ENCODE measurements at regions of chr16 and their contacts with region 1.

Region 1: DNA sequence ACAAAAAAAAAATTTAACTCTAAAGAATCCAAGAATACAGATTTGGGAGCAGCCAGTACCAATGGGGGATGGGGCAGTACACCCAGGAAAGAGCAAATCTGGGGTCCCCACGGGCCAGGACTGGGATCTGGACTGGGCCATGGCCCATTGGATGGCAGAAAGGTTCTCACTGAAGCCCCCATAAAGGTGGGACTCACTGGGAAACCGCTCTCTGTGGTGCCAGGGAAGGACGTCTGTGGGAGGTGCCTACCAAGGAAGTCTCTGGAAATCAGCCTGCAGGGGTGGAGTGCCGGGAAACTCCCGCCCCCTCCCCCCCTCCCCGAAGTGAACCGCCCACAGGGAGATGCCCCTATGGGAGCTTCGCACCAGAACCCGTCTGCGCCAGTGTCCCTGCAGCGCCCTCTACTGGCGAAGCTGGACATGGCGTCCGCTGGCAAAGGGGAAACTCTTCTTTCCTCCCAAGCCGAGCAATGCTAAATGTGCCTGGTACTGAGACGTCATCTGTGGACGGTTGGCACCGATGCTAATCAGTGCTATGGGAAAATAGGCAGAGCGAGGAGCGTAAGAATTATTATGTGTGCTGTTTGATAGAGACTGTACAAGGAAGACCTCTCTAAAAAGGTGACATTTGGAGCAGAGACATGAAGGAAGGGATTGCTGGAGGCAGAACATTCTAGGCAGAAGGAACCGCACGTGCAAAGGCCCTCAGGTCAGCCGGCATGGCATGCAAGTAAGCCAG is 671.1 kb downstream of the WWOX start:
- DNase-seq: peak; percentile 73 to 80 (median 77)
- H3K4me3 ChIP-seq: no peak overlapping the region
- H3K4me3 Mint-ChIP-seq: peak overlapping the region in 3 of 8 donors; percentile 4 to 48 (median 33)
- H3K27ac ChIP-seq: no peak overlapping the region
- H3K27ac Mint-ChIP-seq: peak overlapping the region; percentile 5 to 83 (median 31)
- H3K4me1 ChIP-seq: peaks cover 24% of the 10 kb centered on the region
- H3K4me1 Mint-ChIP-seq: peaks cover 17 to 30% (median 21%) of the 10 kb centered on the region in 4 donors
- H3K27me3 ChIP-seq: no peaks in the 10 kb centered on the region
- H3K27me3 Mint-ChIP-seq: peaks cover 0 to 2% of the 10 kb centered on the region in 2 donors

Region 2: DNA sequence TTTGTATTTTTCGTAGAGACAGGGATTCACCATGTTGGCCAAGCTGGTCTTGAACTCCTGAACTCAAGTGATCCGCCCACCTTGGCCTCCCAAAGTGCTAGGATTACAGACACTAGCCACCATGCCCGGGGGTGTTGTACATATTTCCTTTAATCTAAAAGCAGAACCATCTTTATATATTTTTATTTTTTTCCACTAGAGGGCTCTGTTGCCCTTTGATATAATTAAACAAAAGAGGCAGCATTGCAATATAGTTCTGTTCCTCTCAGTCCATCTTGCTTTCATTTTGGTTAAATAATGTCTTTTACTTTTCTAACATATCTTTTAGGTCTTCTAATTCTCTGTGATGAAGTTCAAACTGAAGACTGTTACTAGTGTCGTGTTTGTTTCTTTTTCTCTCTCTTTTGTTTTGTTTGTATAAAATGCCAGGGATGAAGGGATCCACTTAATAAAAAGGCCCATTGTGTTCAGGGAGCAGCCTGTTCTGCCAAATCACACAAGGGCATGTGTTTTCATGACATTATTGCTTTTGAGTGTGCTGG is 647.7 kb before region 1 on chr16:
- CTCF ChIA-PET with region 1: no interaction called
- POLR2A ChIA-PET with region 1: no interaction called
- intact Hi-C with region 1: loop called (anchors 1 kb)
- DNase-seq: peak in 4 of 5 donors; percentile 54 to 63 (median 58)
- H3K4me3 ChIP-seq: no peak overlapping the region
- H3K4me3 Mint-ChIP-seq: peak overlapping the region in 3 of 8 donors; percentile 32 to 53 (median 49)
- H3K27ac ChIP-seq: no peak overlapping the region
- H3K27ac Mint-ChIP-seq: peak overlapping the region in 5 of 7 donors; percentile 14 to 73 (median 62)
- H3K4me1 ChIP-seq: no peaks in the 10 kb centered on the region
- H3K4me1 Mint-ChIP-seq: peaks cover 2 to 11% (median 4%) of the 10 kb centered on the region in 4 donors
- H3K27me3 ChIP-seq: no peaks in the 10 kb centered on the region
- H3K27me3 Mint-ChIP-seq: no peaks in the 10 kb centered on the region

Region 3: DNA sequence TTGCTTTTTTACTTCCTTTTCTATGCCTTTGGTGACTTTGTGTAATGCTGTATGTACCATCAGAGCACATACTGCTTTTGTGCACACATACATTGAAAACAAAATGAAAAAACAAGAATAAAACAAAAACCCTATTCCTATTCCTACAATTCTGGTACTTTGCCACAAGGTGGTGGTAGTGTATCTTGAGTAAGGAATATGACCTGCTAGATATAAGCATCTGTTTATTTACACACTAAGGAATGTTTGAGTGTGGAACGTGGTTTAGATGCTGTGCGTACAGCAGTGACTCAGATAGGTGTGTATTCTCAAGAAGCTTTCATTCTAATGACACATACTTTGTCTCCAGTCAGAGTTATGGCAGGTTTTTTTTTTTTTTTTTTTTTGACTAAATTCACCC is 64.8 kb before region 1 on chr16:
- CTCF ChIA-PET with region 1: interaction called, 64 read pairs
- POLR2A ChIA-PET with region 1: interaction called, 14 read pairs
- intact Hi-C with region 1: loop called (anchors 1 kb)
- DNase-seq: peak in 4 of 5 donors; percentile 23 to 48 (median 44)
- H3K4me3 ChIP-seq: no peak overlapping the region
- H3K4me3 Mint-ChIP-seq: no peak overlapping the region
- H3K27ac ChIP-seq: no peak overlapping the region
- H3K27ac Mint-ChIP-seq: no peak overlapping the region
- H3K4me1 ChIP-seq: no peaks in the 10 kb centered on the region
- H3K4me1 Mint-ChIP-seq: peaks cover 0 to 3% (median 0%) of the 10 kb centered on the region in 4 donors
- H3K27me3 ChIP-seq: no peaks in the 10 kb centered on the region
- H3K27me3 Mint-ChIP-seq: no peaks in the 10 kb centered on the region

Region 4: DNA sequence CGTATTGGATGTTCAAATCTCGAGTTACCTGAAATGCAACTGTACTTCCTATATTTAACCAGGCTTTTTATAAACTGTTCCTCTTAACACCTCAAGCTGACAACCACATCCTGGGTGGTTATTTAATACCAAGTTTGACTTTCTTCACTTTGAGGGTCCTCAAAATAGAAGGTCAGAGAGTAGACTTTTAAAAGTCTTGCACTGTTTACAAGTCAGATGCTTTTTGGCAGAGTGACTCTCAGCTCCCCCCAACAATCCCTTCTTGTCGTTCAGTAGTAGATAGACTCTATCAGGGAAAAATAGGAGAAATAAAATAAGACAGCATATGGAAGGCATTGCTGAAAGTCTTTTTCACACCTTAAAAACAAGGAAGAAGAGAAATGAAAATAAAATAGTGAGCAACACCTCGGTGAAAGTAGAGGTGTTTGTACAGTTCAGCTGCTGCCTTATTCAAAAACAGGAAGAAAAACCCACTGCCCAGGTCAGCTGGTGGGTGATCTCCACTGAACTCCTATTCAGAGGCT is 20.7 kb before region 1 on chr16:
- CTCF ChIA-PET with region 1: interaction called, 13 read pairs
- POLR2A ChIA-PET with region 1: interaction called, 11 read pairs
- intact Hi-C with region 1: no loop called
- DNase-seq: peak in 4 of 5 donors; percentile 27 to 47 (median 34)
- H3K4me3 ChIP-seq: peak overlapping the region in 1 of 2 donors; percentile 5
- H3K4me3 Mint-ChIP-seq: peak overlapping the region; percentile 23 to 85 (median 68)
- H3K27ac ChIP-seq: peak overlapping the region; percentile 10
- H3K27ac Mint-ChIP-seq: peak overlapping the region; percentile 14 to 96 (median 55)
- H3K4me1 ChIP-seq: peaks cover 32% of the 10 kb centered on the region
- H3K4me1 Mint-ChIP-seq: peaks cover 26 to 38% (median 29%) of the 10 kb centered on the region in 4 donors
- H3K27me3 ChIP-seq: no peaks in the 10 kb centered on the region
- H3K27me3 Mint-ChIP-seq: no peaks in the 10 kb centered on the region

Region 5: GRCh38 chr16:78791011-78791410 is 20.5 kb after region 1 on chr16:
- CTCF ChIA-PET with region 1: no interaction called
- POLR2A ChIA-PET with region 1: no interaction called
- intact Hi-C with region 1: no loop called
- DNase-seq: no peak
- H3K4me3 ChIP-seq: no peak overlapping the region
- H3K4me3 Mint-ChIP-seq: no peak overlapping the region
- H3K27ac ChIP-seq: no peak overlapping the region
- H3K27ac Mint-ChIP-seq: peak overlapping the region in 3 of 7 donors; percentile 39 to 72 (median 55)
- H3K4me1 ChIP-seq: peaks cover 18% of the 10 kb centered on the region
- H3K4me1 Mint-ChIP-seq: peaks cover 14 to 25% (median 19%) of the 10 kb centered on the region in 4 donors
- H3K27me3 ChIP-seq: no peaks in the 10 kb centered on the region
- H3K27me3 Mint-ChIP-seq: no peaks in the 10 kb centered on the region

Region 6: GRCh38 chr16:79047229-79047983 is 276.9 kb after region 1 on chr16:
- CTCF ChIA-PET with region 1: no interaction called
- POLR2A ChIA-PET with region 1: no interaction called
- intact Hi-C with region 1: loop called (anchors 1 kb)
- DNase-seq: peak in 4 of 5 donors; percentile 14 to 38 (median 23)
- H3K4me3 ChIP-seq: no peak overlapping the region
- H3K4me3 Mint-ChIP-seq: no peak overlapping the region
- H3K27ac ChIP-seq: no peak overlapping the region
- H3K27ac Mint-ChIP-seq: no peak overlapping the region
- H3K4me1 ChIP-seq: peaks cover 18% of the 10 kb centered on the region
- H3K4me1 Mint-ChIP-seq: peaks cover 21 to 24% (median 22%) of the 10 kb centered on the region in 4 donors
- H3K27me3 ChIP-seq: no peaks in the 10 kb centered on the region
- H3K27me3 Mint-ChIP-seq: no peaks in the 10 kb centered on the region

Region 7: DNA sequence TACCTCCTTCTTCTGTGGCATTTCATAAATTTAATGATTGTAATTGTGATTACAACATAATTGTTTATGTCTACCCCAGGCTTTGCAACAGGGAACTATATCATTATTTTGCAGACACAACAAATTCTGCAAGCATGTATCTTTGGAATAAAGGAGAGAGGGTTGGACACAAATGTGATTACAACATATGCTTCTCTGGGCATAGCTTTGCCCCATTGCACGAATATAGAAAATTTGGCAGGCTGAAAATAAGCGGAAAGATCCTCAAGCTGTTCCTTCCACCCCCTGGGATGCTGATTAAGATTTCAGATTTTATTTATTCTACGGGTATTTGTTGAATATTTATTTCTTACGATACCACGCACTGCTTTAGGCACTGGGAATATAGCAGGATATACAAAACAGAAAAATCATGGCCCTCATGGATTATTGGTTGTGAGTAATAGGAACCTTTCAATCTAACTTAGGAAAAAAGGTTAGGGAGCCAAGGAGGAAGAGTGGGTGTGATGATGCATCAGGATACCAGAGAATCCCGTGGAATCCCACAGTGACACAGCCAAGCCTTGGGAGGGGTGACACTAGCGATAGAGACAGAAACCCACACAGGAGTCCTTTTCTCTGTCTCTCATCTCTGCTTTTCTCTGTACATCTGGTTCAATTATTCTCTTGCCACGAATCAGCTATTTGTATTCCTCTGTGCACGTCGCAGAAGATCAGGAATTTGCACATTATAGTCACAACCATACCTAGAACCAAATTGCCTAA is 309.3 kb after region 1 on chr16:
- CTCF ChIA-PET with region 1: no interaction called
- POLR2A ChIA-PET with region 1: no interaction called
- intact Hi-C with region 1: no loop called
- DNase-seq: no peak
- H3K4me3 ChIP-seq: no peak overlapping the region
- H3K4me3 Mint-ChIP-seq: no peak overlapping the region
- H3K27ac ChIP-seq: no peak overlapping the region
- H3K27ac Mint-ChIP-seq: no peak overlapping the region
- H3K4me1 ChIP-seq: peaks cover 25% of the 10 kb centered on the region
- H3K4me1 Mint-ChIP-seq: peaks cover 11 to 31% (median 25%) of the 10 kb centered on the region in 4 donors
- H3K27me3 ChIP-seq: no peaks in the 10 kb centered on the region
- H3K27me3 Mint-ChIP-seq: peaks cover 0 to 2% of the 10 kb centered on the region in 2 donors

Measured in CD4-positive, alpha-beta memory T cell (primary cell).